Gastrocnemius medialis (tissue), 4 donors: ENCODE measurements at regions of chr3 and their contacts with region 1.

Region 1: GRCh38 chr3:66971891-66972551 is 26.1 kb upstream of the KBTBD8 start:
- DNase-seq: peak; percentile 38 to 63
- ATAC-seq: peak; percentile 89 to 99
- H3K4me3 ChIP-seq: peak overlapping the region; percentile 36 to 65 (median 41)
- H3K27ac ChIP-seq: peak overlapping the region in 1 of 4 donors; percentile 36
- H3K4me1 ChIP-seq: no peaks in the 10 kb centered on the region
- H3K27me3 ChIP-seq: no peaks in the 10 kb centered on the region
- CTCF ChIP-seq: peak; percentile 56 to 85 (median 72)
- POLR2A ChIP-seq: no peak

Region 2: DNA sequence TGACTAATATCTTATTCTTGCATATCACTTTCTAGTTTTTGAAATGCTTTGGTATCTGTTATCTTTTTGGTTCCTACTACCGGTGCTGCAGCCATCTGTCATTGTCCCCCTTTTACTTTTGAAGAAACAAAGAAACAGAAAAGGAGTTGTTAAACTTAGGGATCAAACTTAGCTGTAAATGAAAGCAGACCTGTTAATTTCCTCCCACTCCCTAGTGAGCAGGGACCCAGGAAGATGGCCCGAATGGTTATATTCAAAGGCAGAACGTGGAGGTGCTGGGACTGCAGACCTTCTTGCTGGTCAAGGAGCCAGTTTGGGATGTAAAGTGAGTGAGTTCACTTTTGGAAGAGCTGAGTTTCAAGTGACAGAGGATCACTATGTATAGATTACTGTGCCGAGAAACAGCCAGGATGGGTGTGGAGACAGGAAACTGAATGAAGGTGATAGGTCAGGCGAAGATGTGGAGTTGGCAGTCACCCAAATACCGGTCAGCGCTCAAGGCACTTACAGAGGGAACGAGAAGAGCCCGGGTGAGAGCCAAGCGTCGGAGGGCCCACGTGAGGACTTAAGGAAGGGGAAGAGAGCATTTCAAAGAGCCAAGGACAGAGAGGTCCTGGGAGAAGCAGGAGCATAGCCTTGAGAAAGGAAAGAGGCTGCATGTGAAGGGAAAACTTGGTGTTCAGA is 46.2 kb after region 1 on chr3:
- in situ Hi-C with region 1: no loop called
- intact Hi-C with region 1: no loop called
- DNase-seq: no peak
- ATAC-seq: no peak
- H3K4me3 ChIP-seq: no peak overlapping the region
- H3K27ac ChIP-seq: no peak overlapping the region
- H3K4me1 ChIP-seq: no peaks in the 10 kb centered on the region
- H3K27me3 ChIP-seq: peaks cover 0 to 6% (median 0%) of the 10 kb centered on the region in 3 donors
- CTCF ChIP-seq: no peak
- POLR2A ChIP-seq: no peak

Region 3: DNA sequence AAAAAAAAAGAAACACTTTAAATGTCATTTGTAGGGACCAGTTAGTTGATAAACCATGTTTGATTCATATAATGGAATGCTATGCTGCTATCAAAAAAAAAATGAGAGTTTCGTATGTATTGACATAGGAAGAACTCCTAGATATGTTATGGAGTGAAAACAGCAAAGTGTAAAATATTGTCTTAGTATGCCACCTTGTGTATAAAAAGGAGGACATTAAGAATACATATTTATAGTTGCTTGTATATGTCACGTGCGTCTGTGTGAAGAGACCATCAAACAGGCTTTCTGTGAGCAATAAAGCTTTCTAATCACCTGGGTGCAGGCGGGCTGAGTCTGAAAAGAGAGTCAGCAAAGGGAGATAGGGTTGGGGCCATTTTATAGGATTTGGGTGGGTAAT is 65.6 kb after region 1 on chr3:
- in situ Hi-C with region 1: no loop called
- intact Hi-C with region 1: loop called (anchors 1 kb)
- DNase-seq: no peak
- ATAC-seq: no peak
- H3K4me3 ChIP-seq: no peak overlapping the region
- H3K27ac ChIP-seq: no peak overlapping the region
- H3K4me1 ChIP-seq: no peaks in the 10 kb centered on the region
- H3K27me3 ChIP-seq: no peaks in the 10 kb centered on the region
- CTCF ChIP-seq: no peak
- POLR2A ChIP-seq: no peak